ENCODE measurements at regions of chr15 and their contacts with region 1.

Region 1: GRCh38 chr15:71397377-71397776 is 282.1 kb downstream of the THSD4 start:
- DNase-seq: peak; percentile 36
- ATAC-seq: no peak
- H3K4me3 ChIP-seq: no peak overlapping the region
- H3K27ac ChIP-seq: no peak overlapping the region
- H3K4me1 ChIP-seq: peaks cover 10% of the 10 kb centered on the region
- H3K27me3 ChIP-seq: no peaks in the 10 kb centered on the region
- CTCF ChIP-seq: no peak
- POLR2A ChIP-seq: no peak
- RAD21 ChIP-seq: no peak

Region 2: DNA sequence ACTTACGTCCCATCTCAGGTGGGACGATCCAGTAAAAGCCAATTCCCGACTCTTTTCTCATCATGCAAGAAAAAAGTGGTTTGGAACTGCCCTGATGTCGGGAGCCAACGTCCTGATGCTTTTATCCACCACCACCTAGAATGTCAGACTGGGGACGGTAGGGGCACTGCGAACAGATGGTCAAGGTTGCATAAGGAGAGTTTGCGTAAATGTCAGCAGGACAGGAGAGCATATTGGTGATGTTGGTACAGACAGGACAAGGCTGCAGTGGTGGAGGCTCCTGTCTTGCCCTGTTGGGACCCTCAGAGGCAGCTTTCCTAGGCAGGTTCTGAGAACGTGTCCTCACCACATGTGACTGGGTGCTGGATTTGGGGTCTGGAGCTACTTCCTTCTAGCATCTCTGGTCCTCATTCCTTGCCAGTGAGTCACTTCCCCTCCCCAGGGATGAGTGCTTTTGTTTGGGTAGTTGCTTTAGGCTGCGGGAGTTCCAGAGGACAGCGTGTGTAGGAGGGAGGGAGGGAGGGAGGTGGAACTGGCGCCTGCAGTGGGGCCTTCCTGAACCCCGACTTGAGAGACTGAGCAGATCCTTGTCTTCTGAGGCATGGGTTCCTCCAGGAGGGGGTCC is 261.1 kb before region 1 on chr15:
- CTCF ChIA-PET with region 1: no interaction called
- POLR2A ChIA-PET with region 1: interaction called, 13 read pairs
- dilution Hi-C with region 1: no loop called
- in situ Hi-C with region 1: no loop called
- intact Hi-C with region 1: no loop called
- DNase-seq: peak; percentile 90
- ATAC-seq: peak; percentile 91
- H3K4me3 ChIP-seq: no peak overlapping the region
- H3K27ac ChIP-seq: peak overlapping the region; percentile 77
- H3K4me1 ChIP-seq: peaks cover 17% of the 10 kb centered on the region
- H3K27me3 ChIP-seq: no peaks in the 10 kb centered on the region
- CTCF ChIP-seq: no peak
- POLR2A ChIP-seq: no peak
- RAD21 ChIP-seq: no peak